ENCODE measurements at regions of chr2 and their contacts with region 1.

Region 1: DNA sequence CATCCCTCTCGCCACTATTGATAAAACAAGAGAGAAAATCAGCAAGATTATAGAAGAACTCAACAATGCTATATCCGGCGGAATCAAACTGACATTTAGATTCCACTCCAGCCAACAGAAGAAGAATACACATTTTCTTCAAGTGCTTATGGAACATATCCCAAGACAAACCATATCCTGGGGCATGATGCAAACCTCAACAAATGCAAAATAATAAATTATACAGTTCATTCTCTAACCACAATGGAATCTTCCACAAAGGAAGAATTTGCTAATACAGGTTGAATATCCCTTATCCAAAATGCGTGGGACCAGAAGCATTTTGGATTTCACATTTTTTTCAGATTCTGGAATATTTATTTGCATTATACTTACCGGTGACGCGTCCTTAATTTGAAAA is 51.4 kb upstream of the YPEL5 start:
- DNase-seq: no peak
- H3K4me3 Mint-ChIP-seq: no peak overlapping the region
- H3K27ac Mint-ChIP-seq: no peak overlapping the region
- H3K4me1 Mint-ChIP-seq: no peaks in the 10 kb centered on the region
- H3K27me3 Mint-ChIP-seq: peaks cover 28% of the 10 kb centered on the region

Region 2: DNA sequence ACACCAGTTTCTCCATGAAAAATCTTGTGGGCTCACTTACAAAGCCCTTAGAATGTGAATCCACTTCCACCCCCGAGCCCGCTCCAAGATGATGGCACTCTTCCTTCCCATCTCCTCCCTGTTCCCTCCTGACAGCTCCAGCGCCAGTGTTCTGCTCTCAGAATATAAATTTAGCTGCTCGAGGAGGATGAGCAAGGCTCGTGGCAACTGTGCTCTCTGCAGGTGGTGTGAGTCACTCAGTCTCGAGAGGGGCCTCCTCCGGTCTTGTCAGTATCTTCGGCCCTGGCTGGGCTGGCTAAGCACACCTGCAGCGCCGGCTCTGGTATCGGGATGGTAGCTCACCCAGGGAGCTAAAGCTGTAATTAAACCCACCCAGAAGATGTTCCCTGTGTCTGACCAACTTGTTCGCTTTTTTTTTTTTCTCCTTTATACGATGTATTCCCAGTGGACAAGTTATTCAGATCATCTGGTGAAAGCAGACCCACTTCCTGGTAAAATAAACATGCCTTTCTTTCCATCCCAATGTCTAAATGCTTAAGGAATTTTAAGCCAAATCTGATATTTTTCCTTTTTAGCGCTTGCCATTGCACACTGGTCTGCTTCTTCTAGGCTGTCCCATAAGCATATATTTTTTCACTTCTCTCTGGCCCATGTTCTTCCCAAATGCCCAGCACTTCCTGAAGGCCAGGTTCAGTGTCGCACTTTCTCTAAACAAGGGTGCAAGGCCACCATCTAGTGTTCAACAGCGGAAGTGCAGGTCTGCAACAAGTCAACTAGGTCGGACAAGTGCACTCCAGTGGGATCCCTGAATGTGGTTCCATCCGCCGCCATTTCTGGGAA is 20.0 kb after region 1 on chr2:
- intact Hi-C with region 1: loop called (anchors 1 kb)
- DNase-seq: peak; percentile 89
- H3K4me3 Mint-ChIP-seq: no peak overlapping the region
- H3K27ac Mint-ChIP-seq: no peak overlapping the region
- H3K4me1 Mint-ChIP-seq: peaks cover 4% of the 10 kb centered on the region
- H3K27me3 Mint-ChIP-seq: peaks cover 3% of the 10 kb centered on the region

Region 3: DNA sequence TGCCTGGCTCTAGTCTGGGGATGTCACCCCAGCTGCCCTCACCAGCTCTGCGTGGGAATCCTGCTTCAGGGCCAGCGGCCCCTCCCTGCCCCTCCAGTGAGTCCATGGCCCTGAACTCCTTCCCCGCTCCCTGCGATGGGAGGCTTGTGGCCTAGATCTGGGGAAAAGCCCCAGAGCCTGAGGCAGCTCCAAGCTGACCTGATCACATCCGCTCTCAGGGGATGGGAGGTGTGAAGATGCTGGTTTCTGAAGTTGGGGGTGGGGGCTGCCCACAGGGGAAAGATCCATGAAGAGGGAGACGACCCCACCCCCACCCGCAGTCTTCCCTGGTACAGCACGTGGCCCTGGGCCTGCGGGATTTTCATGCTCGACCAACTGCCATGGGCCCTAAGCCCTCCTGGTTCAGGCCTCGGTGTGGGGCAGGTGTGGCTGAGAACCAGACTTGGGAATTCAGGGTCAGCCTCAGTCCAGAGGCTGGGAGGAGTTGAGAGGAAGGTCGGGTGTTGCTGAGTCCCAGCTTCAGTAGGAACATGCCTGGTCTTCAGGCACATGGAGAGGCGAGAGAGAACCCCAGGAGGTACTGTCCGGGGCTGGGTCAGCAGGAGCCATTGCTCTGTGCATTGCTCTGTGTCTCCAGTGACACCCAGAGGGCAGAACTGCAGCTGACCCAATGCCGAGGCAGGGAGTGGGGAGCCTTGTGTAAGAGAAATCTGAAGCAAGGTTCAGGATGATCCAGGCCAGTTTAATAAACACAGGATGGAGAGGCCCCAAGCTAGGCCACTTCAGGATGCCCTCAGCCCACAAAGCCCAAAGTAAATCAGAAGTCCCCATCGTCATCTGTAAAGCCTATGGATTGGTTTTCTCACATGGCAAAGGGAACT is 596.8 kb after region 1 on chr2:
- intact Hi-C with region 1: no loop called
- DNase-seq: peak; percentile 55
- H3K4me3 Mint-ChIP-seq: no peak overlapping the region
- H3K27ac Mint-ChIP-seq: no peak overlapping the region
- H3K4me1 Mint-ChIP-seq: no peaks in the 10 kb centered on the region
- H3K27me3 Mint-ChIP-seq: peaks cover 13% of the 10 kb centered on the region